ENCODE measurements at regions of chr3 and their contacts with region 1.

Region 1: GRCh38 chr3:128226795-128227395 is 73.6 kb downstream of the EEFSEC start:
- DNase-seq: peak; percentile 54
- H3K4me3 Mint-ChIP-seq: no peak overlapping the region
- H3K27ac Mint-ChIP-seq: no peak overlapping the region
- H3K4me1 Mint-ChIP-seq: peaks cover 3% of the 10 kb centered on the region
- H3K27me3 Mint-ChIP-seq: no peaks in the 10 kb centered on the region

Region 2: GRCh38 chr3:128210711-128211110 is 16.2 kb before region 1 on chr3:
- CTCF ChIA-PET with region 1: interaction called, 10 read pairs
- POLR2A ChIA-PET with region 1: no interaction called
- intact Hi-C with region 1: no loop called
- DNase-seq: no peak
- H3K4me3 Mint-ChIP-seq: no peak overlapping the region
- H3K27ac Mint-ChIP-seq: no peak overlapping the region
- H3K4me1 Mint-ChIP-seq: no peaks in the 10 kb centered on the region
- H3K27me3 Mint-ChIP-seq: no peaks in the 10 kb centered on the region

Region 3: GRCh38 chr3:128242818-128243601 is 16.1 kb after region 1 on chr3:
- CTCF ChIA-PET with region 1: no interaction called
- POLR2A ChIA-PET with region 1: no interaction called
- intact Hi-C with region 1: no loop called
- DNase-seq: peak; percentile 45
- H3K4me3 Mint-ChIP-seq: no peak overlapping the region
- H3K27ac Mint-ChIP-seq: peak overlapping the region; percentile 76
- H3K4me1 Mint-ChIP-seq: peaks cover 12% of the 10 kb centered on the region
- H3K27me3 Mint-ChIP-seq: no peaks in the 10 kb centered on the region

Region 4: GRCh38 chr3:128322066-128323022 is 95.4 kb after region 1 on chr3:
- CTCF ChIA-PET with region 1: interaction called, 7 read pairs
- POLR2A ChIA-PET with region 1: no interaction called
- intact Hi-C with region 1: loop called (anchors 1 kb)
- DNase-seq: peak; percentile 70
- H3K4me3 Mint-ChIP-seq: no peak overlapping the region
- H3K27ac Mint-ChIP-seq: no peak overlapping the region
- H3K4me1 Mint-ChIP-seq: peaks cover 27% of the 10 kb centered on the region
- H3K27me3 Mint-ChIP-seq: no peaks in the 10 kb centered on the region

Region 5: DNA sequence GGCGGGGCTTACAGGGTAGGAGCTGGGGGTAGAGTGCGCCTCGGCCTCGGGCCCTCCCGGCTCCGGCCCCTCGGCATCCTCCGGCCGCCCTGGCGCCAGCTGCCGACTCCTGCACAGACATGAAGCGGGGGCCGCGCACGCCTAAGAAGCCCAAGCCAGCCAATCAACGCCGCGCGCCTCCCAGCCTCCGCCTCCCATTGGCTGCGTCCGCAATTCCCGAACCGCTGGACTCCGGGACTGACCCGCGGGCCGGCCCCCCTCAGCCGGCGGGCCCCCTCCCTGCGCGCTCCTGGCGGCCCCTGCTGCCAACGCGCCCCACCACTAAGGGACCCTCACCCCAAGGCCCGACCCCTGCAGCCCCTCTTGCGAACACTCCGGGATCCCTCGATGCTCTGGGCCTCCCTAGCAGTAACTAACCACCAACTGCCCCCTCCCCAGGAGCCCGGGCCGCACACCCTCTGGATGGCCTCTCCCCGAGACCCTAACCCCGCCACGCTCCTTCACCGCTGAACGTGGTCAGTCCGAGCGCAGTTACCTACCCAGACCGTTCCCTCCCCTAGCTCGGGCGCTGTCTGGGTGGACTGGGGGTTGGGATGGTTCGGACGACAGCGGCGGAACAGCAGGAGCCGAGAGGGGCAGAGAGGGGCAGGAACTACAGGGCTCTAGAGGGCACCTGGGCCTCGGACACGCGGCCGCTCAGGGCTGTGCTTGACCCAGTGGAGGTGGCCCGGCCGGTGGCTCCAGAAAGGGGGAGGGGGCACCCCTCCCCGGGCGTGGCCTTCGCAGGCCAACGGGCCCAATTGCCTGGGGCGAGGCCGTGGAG is 261.1 kb after region 1 on chr3:
- CTCF ChIA-PET with region 1: no interaction called
- POLR2A ChIA-PET with region 1: no interaction called
- intact Hi-C with region 1: no loop called
- DNase-seq: peak; percentile 52
- H3K4me3 Mint-ChIP-seq: no peak overlapping the region
- H3K27ac Mint-ChIP-seq: no peak overlapping the region
- H3K4me1 Mint-ChIP-seq: peaks cover 42% of the 10 kb centered on the region
- H3K27me3 Mint-ChIP-seq: peaks cover 71% of the 10 kb centered on the region

Measured in activated CD4-positive, alpha-beta memory T cell treated with anti-CD3 and anti-CD28 coated beads for 36 hours (primary cell).